ENCODE measurements at regions of chr20 and their contacts with region 1.

Region 1: GRCh38 chr20:51750037-51750763 is 18.0 kb downstream of the ATP9A start:
- DNase-seq: peak; percentile 100
- ATAC-seq: peak; percentile 87
- H3K4me3 ChIP-seq: peak overlapping the region; percentile 31; the same call in 1 of the 2 replicates
- H3K27ac ChIP-seq: peak overlapping the region; percentile 87
- H3K4me1 ChIP-seq: peaks cover 58% of the 10 kb centered on the region
- H3K27me3 ChIP-seq: no peaks in the 10 kb centered on the region
- CTCF ChIP-seq: no peak

Region 2: DNA sequence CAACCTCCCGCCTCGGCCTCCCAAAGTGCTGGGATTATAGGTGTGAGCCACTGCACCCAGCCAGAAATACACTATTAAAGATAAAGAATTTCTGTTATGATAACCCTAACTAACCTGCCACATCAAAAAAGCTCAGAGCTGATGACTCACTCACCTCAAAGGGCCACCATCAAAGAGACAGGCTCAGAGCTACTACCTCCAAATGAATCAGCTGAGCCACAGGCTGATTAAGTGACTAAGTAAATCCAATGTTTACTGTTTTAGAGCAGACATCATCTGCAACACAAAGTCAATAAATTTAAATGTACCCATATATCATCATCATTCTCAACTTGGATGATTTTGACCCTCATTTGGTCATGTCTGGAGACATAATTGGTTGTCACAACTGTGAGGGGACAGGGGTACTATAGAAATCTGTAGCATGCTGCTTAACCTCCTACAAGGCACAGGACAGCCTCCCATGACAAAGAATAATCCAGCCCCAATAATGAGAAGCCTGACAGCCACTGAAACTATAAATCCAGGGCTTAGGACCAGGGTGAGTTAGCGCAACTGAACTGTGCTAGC is 88.5 kb before region 1 on chr20:
- CTCF ChIA-PET with region 1: no interaction called
- POLR2A ChIA-PET with region 1: interaction called, 4 read pairs
- intact Hi-C with region 1: loop called (anchors 1 kb)
- DNase-seq: peak; percentile 99
- ATAC-seq: peak; percentile 60
- H3K4me3 ChIP-seq: no peak overlapping the region
- H3K27ac ChIP-seq: peak overlapping the region; percentile 88
- H3K4me1 ChIP-seq: peaks cover 55% of the 10 kb centered on the region
- H3K27me3 ChIP-seq: no peaks in the 10 kb centered on the region
- CTCF ChIP-seq: no peak

Region 3: GRCh38 chr20:51712501-51713197 is 37.6 kb before region 1 on chr20:
- CTCF ChIA-PET with region 1: interaction called, 3 read pairs
- POLR2A ChIA-PET with region 1: no interaction called
- intact Hi-C with region 1: loop called (anchors 2 kb)
- DNase-seq: peak; percentile 75
- ATAC-seq: peak; percentile 56
- H3K4me3 ChIP-seq: no peak overlapping the region
- H3K27ac ChIP-seq: no peak overlapping the region
- H3K4me1 ChIP-seq: no peaks in the 10 kb centered on the region
- H3K27me3 ChIP-seq: no peaks in the 10 kb centered on the region
- CTCF ChIP-seq: peak; percentile 95

Region 4: DNA sequence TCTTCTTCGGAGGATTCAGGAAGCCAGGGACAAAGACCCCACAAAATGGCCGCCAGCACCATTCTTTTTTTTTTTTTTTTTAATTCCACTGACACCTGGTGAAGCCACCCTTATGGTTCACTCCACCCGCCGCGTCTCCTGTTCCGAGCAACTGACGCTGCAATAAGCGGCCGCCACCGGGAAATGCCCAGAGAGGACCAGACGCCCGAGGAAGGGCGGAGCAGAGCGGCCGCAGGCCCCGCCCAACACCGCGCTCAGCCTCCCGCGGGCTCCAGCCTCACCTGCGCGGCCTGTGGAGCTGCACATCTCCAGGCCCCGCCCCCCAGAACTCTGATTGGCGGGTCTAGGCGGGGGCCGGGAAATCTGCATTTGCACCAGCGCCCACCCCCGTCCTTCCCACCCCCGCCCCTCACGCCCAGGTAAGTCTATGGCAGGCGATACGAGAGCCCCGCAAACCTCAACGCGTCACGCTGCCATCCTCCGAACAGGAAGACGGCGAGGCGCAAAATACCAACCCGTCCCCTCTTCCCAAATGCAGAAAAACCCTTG is 16.9 kb after region 1 on chr20:
- CTCF ChIA-PET with region 1: no interaction called
- POLR2A ChIA-PET with region 1: interaction called, 3 read pairs
- intact Hi-C with region 1: loop called (anchors 1 kb)
- DNase-seq: peak; percentile 97
- ATAC-seq: peak; percentile 95
- H3K4me3 ChIP-seq: peak overlapping the region; percentile 91
- H3K27ac ChIP-seq: peak overlapping the region; percentile 76
- H3K4me1 ChIP-seq: peaks cover 9% of the 10 kb centered on the region
- H3K27me3 ChIP-seq: no peaks in the 10 kb centered on the region
- CTCF ChIP-seq: no peak

Region 5: DNA sequence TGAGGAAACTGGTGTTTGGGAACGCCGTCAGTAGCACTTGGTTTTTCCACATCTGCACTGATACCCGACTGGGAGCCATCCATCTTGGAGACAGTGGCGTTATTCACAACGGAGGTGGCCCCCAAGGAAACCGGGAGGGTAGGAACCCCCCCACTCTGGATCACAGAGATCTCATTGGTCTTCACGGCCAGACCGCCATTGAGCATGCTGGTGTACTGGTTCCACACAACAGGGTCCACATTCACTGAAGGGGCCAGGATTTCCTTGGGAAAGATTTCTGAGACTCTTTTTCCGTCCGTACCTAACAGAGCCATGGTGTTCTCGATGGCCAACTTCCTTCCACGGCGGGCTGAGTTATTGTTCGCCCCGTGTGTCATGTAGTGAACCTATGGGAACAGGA is 34.1 kb after region 1 on chr20:
- CTCF ChIA-PET with region 1: no interaction called
- POLR2A ChIA-PET with region 1: no interaction called
- intact Hi-C with region 1: no loop called
- DNase-seq: no peak
- ATAC-seq: no peak
- H3K4me3 ChIP-seq: no peak overlapping the region
- H3K27ac ChIP-seq: no peak overlapping the region
- H3K4me1 ChIP-seq: 0 out of 2 replicates have a peak, but pooled peaks cover 4% of the 10 kb centered on the region
- H3K27me3 ChIP-seq: no peaks in the 10 kb centered on the region
- CTCF ChIP-seq: no peak

Region 6: GRCh38 chr20:51800060-51800794 is 50.0 kb after region 1 on chr20:
- CTCF ChIA-PET with region 1: no interaction called
- POLR2A ChIA-PET with region 1: no interaction called
- intact Hi-C with region 1: loop called (anchors 5 kb)
- DNase-seq: peak; percentile 92
- ATAC-seq: peak; percentile 89
- H3K4me3 ChIP-seq: peak overlapping the region; percentile 73
- H3K27ac ChIP-seq: no peak overlapping the region
- H3K4me1 ChIP-seq: peaks cover 33% of the 10 kb centered on the region
- H3K27me3 ChIP-seq: no peaks in the 10 kb centered on the region
- CTCF ChIP-seq: peak; percentile 100

Region 7: GRCh38 chr20:51955756-51956155 is 205.6 kb after region 1 on chr20:
- CTCF ChIA-PET with region 1: no interaction called
- POLR2A ChIA-PET with region 1: no interaction called
- intact Hi-C with region 1: no loop called
- DNase-seq: no peak
- ATAC-seq: no peak
- H3K4me3 ChIP-seq: no peak overlapping the region
- H3K27ac ChIP-seq: no peak overlapping the region
- H3K4me1 ChIP-seq: no peaks in the 10 kb centered on the region
- H3K27me3 ChIP-seq: no peaks in the 10 kb centered on the region
- CTCF ChIP-seq: no peak

Measured in PC-3 (cell line).